Activated CD4-positive, alpha-beta T cell treated with anti-CD3 and anti-CD28 coated beads, Interleukin-2, amount 10 ng/mL, durations not matched to agents 24 days and 14 days (primary cell): ENCODE measurements at regions of chr11 and their contacts with region 1.

Region 1: GRCh38 chr11:14742849-14743559 is 99.4 kb downstream of the PDE3B start:
- DNase-seq: no peak
- H3K4me3 Mint-ChIP-seq: no peak overlapping the region
- H3K27ac Mint-ChIP-seq: no peak overlapping the region
- H3K4me1 Mint-ChIP-seq: peaks cover 65% of the 10 kb centered on the region
- H3K27me3 Mint-ChIP-seq: no peaks in the 10 kb centered on the region

Region 2: DNA sequence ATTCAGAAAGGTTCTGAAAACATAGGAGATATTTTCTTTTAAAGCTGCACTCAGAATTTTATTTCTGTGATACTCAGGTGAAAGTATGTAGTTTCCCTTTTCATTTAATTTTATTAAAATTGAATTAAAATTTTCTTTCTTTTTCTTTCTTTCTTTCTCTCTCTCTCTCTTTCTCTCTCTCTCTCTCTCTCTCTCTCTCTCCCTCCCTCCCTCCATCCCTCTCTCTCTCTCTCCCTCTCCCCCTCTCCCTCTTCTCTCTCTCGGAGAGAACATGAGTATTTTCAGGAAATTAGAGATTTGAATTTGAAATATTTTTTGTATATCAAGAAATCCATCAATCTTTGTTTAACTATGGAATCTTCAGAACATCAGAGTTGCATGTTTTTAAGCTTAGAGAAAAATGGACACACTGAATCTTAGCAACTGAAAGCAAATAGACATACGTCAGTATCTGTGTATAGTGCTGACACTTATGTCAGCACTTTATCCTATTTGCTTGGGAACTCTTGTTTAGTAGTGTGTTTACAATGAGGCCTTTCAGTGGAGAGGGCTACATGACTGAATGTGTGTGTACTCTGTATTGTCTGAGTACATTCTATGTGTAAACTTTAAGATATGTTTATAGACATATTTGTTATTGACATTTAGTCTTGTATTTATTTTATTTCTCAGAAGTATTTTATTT is 54.9 kb before region 1 on chr11:
- intact Hi-C with region 1: loop called (anchors 10 kb)
- DNase-seq: no peak
- H3K4me3 Mint-ChIP-seq: no peak overlapping the region
- H3K27ac Mint-ChIP-seq: peak overlapping the region; percentile 26
- H3K4me1 Mint-ChIP-seq: peaks cover 34% of the 10 kb centered on the region
- H3K27me3 Mint-ChIP-seq: no peaks in the 10 kb centered on the region